ENCODE measurements at regions of chr7 and their contacts with region 1.

Region 1: GRCh38 chr7:155356323-155357105 is 58.8 kb downstream of the INSIG1 start:
- DNase-seq: peak; percentile 10 to 48
- H3K4me3 ChIP-seq: no peak overlapping the region
- H3K27ac ChIP-seq: no peak overlapping the region
- H3K4me1 ChIP-seq: no peaks in the 10 kb centered on the region
- H3K27me3 ChIP-seq: peaks cover 0 to 78% of the 10 kb centered on the region in 2 donors
- CTCF ChIP-seq: no peak

Region 2: DNA sequence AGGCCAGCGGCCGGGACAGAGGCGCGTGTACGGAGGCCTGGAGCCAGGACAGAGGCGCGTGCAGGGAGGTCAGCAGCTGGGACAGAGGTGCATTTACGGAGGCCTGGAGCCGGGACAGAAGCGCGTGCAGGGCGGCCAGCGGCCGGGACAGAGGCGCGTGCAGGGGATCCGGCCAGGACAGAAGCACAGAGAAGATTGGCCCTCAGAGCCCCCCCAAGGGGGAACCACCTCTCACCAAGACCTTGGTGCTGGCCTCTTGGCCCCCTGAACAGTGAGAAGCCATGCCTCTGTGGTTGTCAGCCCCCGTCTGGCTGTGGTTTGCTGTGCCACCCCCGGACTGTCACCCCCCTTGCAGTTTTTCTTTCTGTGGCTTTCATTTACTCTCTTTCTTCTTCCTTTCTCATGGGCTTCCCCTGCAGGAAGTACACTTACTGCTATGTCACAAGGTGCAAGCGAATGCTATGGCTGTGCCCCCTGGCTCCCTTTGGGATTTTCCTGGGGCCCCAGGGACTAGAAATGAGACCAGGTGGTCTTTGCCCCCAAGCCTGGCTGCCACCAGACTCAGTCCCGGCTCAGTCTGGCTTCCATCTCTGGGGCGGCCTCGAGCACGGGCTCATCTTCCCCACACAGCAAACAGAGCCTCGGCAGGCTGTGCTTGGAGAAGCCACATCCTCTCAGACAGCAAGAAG is 17.7 kb before region 1 on chr7:
- intact Hi-C with region 1: no loop called
- DNase-seq: no peak
- H3K4me3 ChIP-seq: no peak overlapping the region
- H3K27ac ChIP-seq: no peak overlapping the region
- H3K4me1 ChIP-seq: no peaks in the 10 kb centered on the region
- H3K27me3 ChIP-seq: peaks cover 0 to 36% of the 10 kb centered on the region in 2 donors
- CTCF ChIP-seq: no peak

Region 3: GRCh38 chr7:155368894-155369589 is 12.5 kb after region 1 on chr7:
- intact Hi-C with region 1: loop called (anchors 1 kb)
- DNase-seq: peak in 1 of 2 donors; percentile 28
- H3K4me3 ChIP-seq: no peak overlapping the region
- H3K27ac ChIP-seq: no peak overlapping the region
- H3K4me1 ChIP-seq: peaks cover 0 to 28% (median 26%) of the 10 kb centered on the region in 4 donors
- H3K27me3 ChIP-seq: peaks cover 0 to 65% of the 10 kb centered on the region in 2 donors
- CTCF ChIP-seq: no peak

Measured in tibial artery (tissue), 4 donors.